Common myeloid progenitor, CD34-positive (primary cell): ENCODE measurements at regions of chr12 and their contacts with region 1.

Region 1: GRCh38 chr12:65556681-65557437 is 267.4 kb upstream of the HMGA2 start:
- DNase-seq: peak; percentile 74 to 83 (median 77)
- H3K4me3 ChIP-seq: peak overlapping the region in 2 of 7 experiments; percentile 23 to 44
- H3K27ac ChIP-seq: no peak overlapping the region
- H3K4me1 ChIP-seq: peaks cover 0 to 2% (median 1%) of the 10 kb centered on the region in 4 experiments
- H3K27me3 ChIP-seq: no peaks in the 10 kb centered on the region

Region 2: DNA sequence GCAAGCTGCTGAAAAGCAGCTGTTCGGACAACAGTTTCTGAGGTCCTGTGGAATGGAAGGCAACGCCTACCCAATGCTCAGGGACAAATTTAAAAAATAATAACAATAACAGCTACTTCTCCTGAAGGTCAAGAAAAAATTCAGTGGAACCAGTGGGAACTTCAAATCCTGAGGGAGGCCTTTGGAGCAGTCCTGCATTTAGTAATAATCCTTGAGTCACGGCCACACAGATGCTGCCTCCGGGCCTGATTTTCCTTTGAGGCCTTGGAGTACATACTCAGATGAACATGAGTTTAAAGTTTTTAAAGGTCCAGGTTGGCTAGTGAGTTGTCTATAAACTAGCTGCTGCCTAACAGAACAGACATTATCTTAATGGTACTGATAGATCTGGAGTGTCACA is 10.3 kb before region 1 on chr12:
- CTCF ChIA-PET with region 1: interaction called, 12 read pairs
- POLR2A ChIA-PET with region 1: no interaction called
- DNase-seq: no peak
- H3K4me3 ChIP-seq: no peak overlapping the region
- H3K27ac ChIP-seq: no peak overlapping the region
- H3K4me1 ChIP-seq: no peaks in the 10 kb centered on the region
- H3K27me3 ChIP-seq: no peaks in the 10 kb centered on the region